Tibial artery (tissue), 4 donors: ENCODE measurements at regions of chr1 and their contacts with region 1.

Region 1: DNA sequence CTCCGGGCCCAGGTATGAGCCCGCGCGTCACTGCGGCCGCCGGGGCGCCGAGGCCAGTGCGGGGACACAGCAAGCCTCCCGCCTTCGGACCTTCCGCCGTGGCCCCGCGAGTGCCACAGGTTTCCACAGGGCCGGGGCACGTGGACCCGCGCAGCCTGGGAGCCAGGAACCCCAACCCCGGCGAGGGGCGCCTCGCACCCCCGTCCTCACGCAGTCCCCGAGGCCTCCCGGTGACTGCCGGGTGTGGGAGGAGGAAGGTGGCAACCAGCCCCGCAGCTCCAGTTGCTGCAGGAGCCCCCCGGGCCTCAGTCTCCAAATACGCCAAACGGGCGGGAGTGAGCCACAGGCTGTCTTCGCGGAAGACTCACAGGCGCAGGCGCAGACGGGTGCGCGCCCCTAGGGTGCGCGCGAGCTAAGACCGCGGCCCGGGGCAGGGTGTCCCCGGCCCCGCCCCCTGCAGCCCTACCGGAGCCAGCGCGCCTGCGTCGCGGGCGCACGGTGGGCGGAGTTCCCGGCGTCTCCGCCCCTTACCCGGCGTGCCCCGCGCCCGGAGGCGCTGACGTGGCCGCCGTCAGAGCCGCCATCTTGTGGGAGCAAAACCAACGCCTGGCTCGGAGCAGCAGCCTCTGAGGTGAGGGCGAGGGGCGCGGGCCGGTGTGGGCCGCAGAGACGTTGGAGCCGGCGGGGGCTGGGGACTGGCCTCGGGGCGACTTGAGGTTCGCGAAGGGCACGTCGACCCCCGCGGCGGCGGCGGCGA is at the start of gene ARF1:
- DNase-seq: peak; percentile 86 to 94
- H3K4me3 ChIP-seq: peak within 1 kb of the TSS; percentile 87 to 93
- H3K27ac ChIP-seq: peak within 1 kb of the TSS; percentile 95 to 100
- H3K4me1 ChIP-seq: peaks cover 0 to 52% (median 43%) of the 10 kb centered on the region in 4 donors
- H3K27me3 ChIP-seq: no peaks in the 10 kb centered on the region
- CTCF ChIP-seq: peak in 1 of 2 experiments; percentile 27

Region 2: DNA sequence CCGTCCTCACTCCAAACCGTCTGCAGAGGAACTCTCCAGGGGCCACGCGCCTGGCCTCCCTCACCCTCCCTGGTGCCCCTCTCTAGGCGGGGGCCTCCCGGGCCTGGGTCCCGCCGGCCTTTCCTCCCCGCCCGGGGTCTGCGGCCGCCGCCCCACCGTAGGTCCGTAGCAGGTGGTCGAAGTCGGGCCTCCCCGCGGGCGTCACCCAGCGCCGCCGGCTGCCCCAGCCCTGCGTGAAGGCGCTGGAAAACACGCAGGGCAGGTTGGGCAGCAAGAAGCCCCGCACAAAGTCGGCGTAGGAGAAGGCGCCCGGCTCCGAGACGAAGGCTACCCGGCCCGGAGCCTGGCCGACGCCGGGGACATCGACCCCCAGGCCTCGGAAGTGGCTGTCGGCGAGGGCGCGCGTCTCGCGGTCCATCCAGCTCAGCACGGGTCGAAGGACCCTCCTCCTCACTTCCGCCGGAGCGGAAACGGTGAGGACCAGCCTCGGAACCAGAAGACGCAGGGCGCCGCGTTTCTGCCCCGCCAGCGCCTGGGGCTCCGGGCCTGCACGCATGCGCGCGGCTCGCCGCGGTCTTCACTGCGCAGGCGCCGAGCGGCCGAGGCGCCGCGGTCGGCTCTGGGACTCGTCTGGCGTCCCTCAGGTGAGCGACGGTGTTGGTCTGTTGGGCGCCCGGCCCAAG is 347.3 kb before region 1 on chr1 and contains the starts of genes JMJD4 and SNAP47:
- intact Hi-C with region 1: loop called (anchors 10 kb)
- DNase-seq: peak; percentile 89 to 94
- H3K4me3 ChIP-seq: peak within 1 kb of the TSS; percentile 80 to 83
- H3K27ac ChIP-seq: peak within 1 kb of the TSS; percentile 87 to 88
- H3K4me1 ChIP-seq: peaks cover 0 to 42% (median 34%) of the 10 kb centered on the region in 4 donors
- H3K27me3 ChIP-seq: no peaks in the 10 kb centered on the region
- CTCF ChIP-seq: no peak

Region 3: GRCh38 chr1:227762233-227762911 is 319.9 kb before region 1 on chr1:
- intact Hi-C with region 1: loop called (anchors 10 kb)
- DNase-seq: peak; percentile 72 to 85
- H3K4me3 ChIP-seq: no peak overlapping the region
- H3K27ac ChIP-seq: no peak overlapping the region
- H3K4me1 ChIP-seq: peaks cover 0 to 16% (median 6%) of the 10 kb centered on the region in 4 donors
- H3K27me3 ChIP-seq: no peaks in the 10 kb centered on the region
- CTCF ChIP-seq: peak; percentile 69 to 82

Region 4: DNA sequence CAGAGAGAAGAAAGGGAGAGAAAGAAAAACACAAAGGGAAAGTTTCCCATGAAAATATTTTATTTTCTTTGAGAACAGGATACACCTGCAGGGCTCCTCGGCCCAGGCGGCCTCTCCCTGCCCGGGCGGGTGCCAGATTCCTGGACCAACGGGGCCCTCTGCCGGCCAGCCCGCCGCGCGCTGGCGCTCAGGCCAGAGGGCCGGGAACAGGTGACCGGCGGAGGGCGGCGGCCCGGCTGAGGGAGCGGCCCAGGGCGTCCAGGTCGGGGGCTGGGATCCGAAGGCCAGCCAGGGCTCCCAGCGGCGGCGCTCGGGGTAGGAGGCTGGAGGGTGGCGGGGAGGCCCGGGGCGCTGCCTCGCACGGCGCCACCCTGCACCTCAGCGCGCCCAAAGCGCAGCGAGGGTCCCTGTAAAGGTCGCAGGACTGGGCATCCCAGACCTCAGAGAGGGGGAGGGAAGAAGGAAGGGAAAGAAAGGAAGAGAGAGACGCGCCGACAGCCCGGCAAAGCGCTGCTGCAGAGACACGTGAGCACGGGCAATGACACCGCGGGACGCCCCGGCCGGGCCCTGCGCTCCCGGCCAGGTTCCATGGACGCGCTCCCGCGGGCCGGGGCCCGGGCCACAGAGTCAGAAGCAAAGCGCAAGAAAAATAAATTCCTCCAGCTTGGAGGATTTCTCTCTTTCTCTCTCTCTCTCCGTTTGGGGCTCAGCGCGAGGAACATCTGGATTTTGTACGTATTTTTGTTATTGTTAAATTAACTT is 135.5 kb before region 1 on chr1:
- intact Hi-C with region 1: no loop called
- DNase-seq: peak; percentile 60 to 72
- H3K4me3 ChIP-seq: peak overlapping the region; percentile 51 to 66
- H3K27ac ChIP-seq: no peak overlapping the region
- H3K4me1 ChIP-seq: peaks cover 0 to 42% (median 26%) of the 10 kb centered on the region in 4 donors
- H3K27me3 ChIP-seq: peaks cover 0 to 73% of the 10 kb centered on the region in 2 donors
- CTCF ChIP-seq: peak; percentile 67

Region 5: GRCh38 chr1:228102791-228103620 is 20.7 kb after region 1 on chr1 and contains the start of gene C1orf35:
- intact Hi-C with region 1: loop called (anchors 1 kb)
- DNase-seq: peak; percentile 91 to 97
- H3K4me3 ChIP-seq: peak within 1 kb of the TSS; percentile 83 to 93
- H3K27ac ChIP-seq: peak within 1 kb of the TSS; percentile 91 to 98
- H3K4me1 ChIP-seq: peaks cover 0 to 30% (median 24%) of the 10 kb centered on the region in 4 donors
- H3K27me3 ChIP-seq: no peaks in the 10 kb centered on the region
- CTCF ChIP-seq: no peak

Region 6: DNA sequence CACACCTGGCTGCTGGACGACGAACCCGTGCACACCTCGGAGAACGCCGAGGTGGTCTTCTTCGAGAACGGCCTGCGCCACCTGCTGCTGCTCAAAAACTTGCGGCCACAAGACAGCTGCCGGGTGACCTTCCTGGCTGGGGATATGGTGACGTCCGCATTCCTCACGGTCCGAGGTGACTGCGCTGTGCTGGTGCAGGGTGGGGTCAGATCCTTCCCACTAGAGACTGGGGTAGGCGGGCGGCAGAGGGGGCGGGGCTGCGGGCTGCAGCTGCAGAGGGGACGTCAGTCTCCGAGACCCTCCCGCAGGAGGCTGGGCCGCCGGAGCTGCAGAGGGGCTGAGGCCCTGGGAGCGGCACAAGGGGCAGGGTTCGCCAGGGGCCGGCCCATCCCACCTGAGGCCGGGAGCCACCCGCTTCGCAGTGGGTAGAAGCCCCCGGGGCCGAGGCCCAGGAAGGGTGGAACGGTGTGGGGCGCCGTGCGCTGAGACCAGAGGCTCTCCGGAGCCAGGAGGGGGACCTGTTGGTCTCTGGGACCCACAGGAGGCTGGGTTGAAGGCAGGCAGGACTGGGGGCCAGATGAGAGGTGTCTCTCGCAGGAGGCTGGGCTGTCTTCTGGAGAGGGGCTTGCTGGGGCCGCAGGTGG is 233.8 kb after region 1 on chr1:
- intact Hi-C with region 1: no loop called
- DNase-seq: peak in 1 of 2 donors; percentile 61
- H3K4me3 ChIP-seq: no peak overlapping the region
- H3K27ac ChIP-seq: no peak overlapping the region
- H3K4me1 ChIP-seq: no peaks in the 10 kb centered on the region
- H3K27me3 ChIP-seq: peaks cover 0 to 3% of the 10 kb centered on the region in 2 donors
- CTCF ChIP-seq: no peak

Region 7: GRCh38 chr1:228486596-228487335 is 404.5 kb after region 1 on chr1:
- intact Hi-C with region 1: loop called (anchors 5 kb)
- DNase-seq: peak; percentile 56 to 87
- H3K4me3 ChIP-seq: peak overlapping the region; percentile 71 to 80
- H3K27ac ChIP-seq: peak overlapping the region; percentile 90 to 98
- H3K4me1 ChIP-seq: peaks cover 0 to 43% (median 32%) of the 10 kb centered on the region in 4 donors
- H3K27me3 ChIP-seq: no peaks in the 10 kb centered on the region
- CTCF ChIP-seq: peak in 1 of 2 experiments; percentile 15

Region 8: DNA sequence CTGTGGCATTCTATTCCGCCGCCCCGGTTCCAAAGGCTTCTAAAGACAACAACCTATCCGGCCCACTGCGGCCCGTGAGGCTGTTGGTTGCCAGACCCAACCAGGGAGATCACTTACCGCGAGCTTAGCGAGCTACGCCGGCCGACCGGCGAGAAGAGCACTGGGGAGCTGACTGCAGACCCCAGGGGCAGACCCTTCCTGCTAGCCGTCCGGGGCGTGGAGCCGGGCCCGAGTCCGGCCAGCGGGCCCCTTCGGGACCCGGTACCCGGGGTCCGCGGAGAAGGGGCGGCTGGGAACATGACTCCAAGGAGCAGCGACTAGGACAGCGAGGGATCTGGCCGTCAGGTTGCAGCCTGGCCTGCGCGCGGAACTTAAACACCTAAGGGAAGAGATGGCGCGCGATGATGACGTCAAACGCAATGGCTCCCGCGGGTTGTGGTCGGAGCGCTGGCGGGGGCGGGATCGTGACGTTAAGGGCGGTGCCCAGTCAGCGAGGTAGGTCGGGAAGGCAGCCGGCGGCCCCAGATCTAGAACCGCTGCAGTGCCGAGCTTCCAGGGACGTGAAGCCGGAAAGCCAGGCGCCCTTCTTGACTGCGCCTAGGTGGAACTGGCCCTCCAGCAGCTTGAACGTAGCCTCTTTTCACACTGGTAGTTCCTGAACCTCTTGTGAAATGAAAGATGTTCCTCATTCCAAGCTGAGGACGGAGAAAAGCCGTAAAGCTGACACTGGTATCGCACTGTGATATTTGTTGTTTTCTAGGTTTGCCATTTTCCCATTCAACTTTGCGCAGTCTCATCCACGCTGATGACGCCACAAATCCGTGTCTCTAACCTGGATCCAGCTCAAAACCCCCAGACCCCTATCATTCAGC is 1425.9 kb after region 1 on chr1 and contains the start of gene NUP133:
- intact Hi-C with region 1: loop called (anchors 10 kb)
- DNase-seq: peak; percentile 99
- H3K4me3 ChIP-seq: peak within 1 kb of the TSS; percentile 76 to 94
- H3K27ac ChIP-seq: peak within 1 kb of the TSS; percentile 96 to 97
- H3K4me1 ChIP-seq: peaks cover 0 to 27% (median 16%) of the 10 kb centered on the region in 4 donors
- H3K27me3 ChIP-seq: no peaks in the 10 kb centered on the region
- CTCF ChIP-seq: no peak